ENCODE measurements at regions of chr3 and their contacts with region 1.

Region 1: DNA sequence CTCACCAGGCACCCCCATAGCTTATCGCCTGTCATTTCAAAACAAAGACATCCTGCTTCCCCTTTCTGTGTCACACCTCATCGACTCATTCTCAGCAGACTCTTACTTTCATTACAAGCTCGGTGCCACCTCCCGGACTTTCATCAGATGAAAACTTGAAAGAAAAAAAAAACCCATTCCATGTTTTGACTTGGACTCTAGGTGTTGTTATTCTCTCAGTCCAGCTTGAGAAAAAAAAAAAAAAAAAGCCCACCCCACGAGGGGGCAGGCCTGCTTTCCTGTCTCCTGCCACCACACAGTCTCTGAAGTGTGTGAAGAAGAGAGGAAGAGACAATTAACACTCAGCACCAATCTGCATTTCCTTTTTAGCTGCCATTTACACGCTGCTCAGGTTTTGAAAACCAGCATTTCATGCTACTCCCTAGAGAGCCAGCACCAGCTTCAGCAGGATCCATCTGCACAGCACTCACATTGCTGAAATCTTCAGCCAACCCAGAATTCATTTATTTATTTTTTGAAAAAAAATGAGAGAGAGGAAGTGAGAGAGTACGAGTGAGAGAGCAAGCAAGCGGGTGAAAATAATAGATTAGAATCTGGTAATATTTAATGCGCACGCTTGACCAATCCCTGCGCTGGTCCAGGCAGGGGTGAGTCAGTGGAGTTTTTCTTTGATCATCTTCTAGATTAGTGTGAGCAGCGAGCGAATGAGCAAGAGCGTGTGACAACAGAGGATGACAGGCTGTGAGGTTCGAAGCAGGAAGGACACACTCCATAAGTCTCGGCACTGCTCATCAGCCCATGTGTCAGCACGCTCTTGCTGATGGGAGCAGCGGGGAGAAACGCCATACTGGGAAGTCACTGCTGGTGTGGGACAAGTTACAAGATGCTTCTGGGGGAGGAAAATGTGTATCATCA is 23.5 kb downstream of the ZNF80 start:
- DNase-seq: peak; percentile 89
- H3K4me3 Mint-ChIP-seq: no peak overlapping the region
- H3K27ac Mint-ChIP-seq: no peak overlapping the region
- H3K4me1 Mint-ChIP-seq: peaks cover 4% of the 10 kb centered on the region
- H3K27me3 Mint-ChIP-seq: no peaks in the 10 kb centered on the region

Region 2: DNA sequence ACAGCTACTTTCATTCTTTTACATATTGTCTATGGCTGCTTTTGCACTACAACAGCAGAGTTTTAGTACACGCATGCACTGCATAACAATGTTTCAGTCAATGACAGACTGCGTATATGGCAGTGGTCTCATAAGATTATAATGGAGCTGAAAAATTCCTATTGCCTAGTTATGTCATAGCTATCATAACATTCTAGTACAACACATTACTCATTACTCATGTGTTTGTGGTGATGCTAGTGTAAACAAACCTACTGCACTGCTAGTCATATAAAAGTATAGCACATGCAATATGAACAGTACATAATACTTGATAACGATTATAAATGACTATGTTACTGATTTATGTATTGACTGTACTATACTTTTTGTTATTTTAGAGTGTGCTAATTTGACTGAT is 109.5 kb before region 1 on chr3:
- CTCF ChIA-PET with region 1: no interaction called
- POLR2A ChIA-PET with region 1: no interaction called
- intact Hi-C with region 1: no loop called
- DNase-seq: no peak
- H3K4me3 Mint-ChIP-seq: no peak overlapping the region
- H3K27ac Mint-ChIP-seq: no peak overlapping the region
- H3K4me1 Mint-ChIP-seq: no peaks in the 10 kb centered on the region
- H3K27me3 Mint-ChIP-seq: peaks cover 3% of the 10 kb centered on the region

Region 3: GRCh38 chr3:114171677-114172076 is 42.2 kb before region 1 on chr3:
- CTCF ChIA-PET with region 1: no interaction called
- POLR2A ChIA-PET with region 1: no interaction called
- intact Hi-C with region 1: no loop called
- DNase-seq: no peak
- H3K4me3 Mint-ChIP-seq: no peak overlapping the region
- H3K27ac Mint-ChIP-seq: no peak overlapping the region
- H3K4me1 Mint-ChIP-seq: peaks cover 8% of the 10 kb centered on the region
- H3K27me3 Mint-ChIP-seq: no peaks in the 10 kb centered on the region

Region 4: DNA sequence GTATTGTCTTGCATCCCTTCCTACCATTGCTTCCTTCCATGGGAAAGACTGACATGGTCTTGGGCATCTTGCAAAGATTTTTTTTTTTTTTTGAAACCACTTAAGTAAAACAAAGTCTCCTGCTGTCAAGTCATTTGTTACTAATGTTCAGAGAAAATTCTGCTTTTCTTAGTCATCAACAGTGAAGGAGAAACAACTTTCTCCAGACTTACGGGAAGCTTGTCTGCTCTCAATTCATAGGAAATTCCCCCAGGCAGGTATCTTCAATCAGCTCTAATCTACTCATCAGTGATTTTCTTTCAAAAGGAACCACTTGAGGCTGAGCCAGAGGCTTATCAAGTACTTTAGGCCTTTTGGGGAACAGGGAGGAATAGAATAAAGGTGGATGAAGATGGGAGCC is 19.1 kb before region 1 on chr3:
- CTCF ChIA-PET with region 1: interaction called, 12 read pairs
- POLR2A ChIA-PET with region 1: interaction called, 5 read pairs
- intact Hi-C with region 1: loop called (anchors 2 kb)
- DNase-seq: no peak
- H3K4me3 Mint-ChIP-seq: no peak overlapping the region
- H3K27ac Mint-ChIP-seq: peak overlapping the region; percentile 44
- H3K4me1 Mint-ChIP-seq: peaks cover 6% of the 10 kb centered on the region
- H3K27me3 Mint-ChIP-seq: no peaks in the 10 kb centered on the region

Region 5: GRCh38 chr3:114252954-114253353 is 39.1 kb after region 1 on chr3:
- CTCF ChIA-PET with region 1: no interaction called
- POLR2A ChIA-PET with region 1: interaction called, 4 read pairs
- intact Hi-C with region 1: loop called (anchors 1 kb)
- DNase-seq: no peak
- H3K4me3 Mint-ChIP-seq: no peak overlapping the region
- H3K27ac Mint-ChIP-seq: no peak overlapping the region
- H3K4me1 Mint-ChIP-seq: peaks cover 15% of the 10 kb centered on the region
- H3K27me3 Mint-ChIP-seq: no peaks in the 10 kb centered on the region

Region 6: DNA sequence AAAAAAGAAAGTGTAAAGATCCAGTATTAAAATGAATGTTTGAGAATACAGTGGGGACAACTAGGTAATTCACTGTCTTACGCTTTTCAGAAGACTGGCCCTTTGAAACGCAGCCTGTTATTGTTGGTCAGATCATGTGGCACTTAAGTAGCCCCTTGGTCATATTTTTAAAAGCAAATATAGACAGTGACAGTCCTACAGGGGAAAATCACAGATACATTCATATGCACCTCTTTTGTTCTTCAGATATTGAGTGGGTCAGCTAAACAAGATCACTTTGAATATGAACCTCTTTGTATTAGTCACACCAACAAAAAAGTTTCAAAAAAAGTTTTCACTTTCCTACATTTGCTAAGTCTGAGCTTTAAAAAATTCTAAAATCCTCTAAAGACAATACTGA is 115.9 kb after region 1 on chr3:
- CTCF ChIA-PET with region 1: interaction called, 3 read pairs
- POLR2A ChIA-PET with region 1: interaction called, 16 read pairs
- intact Hi-C with region 1: loop called (anchors 1 kb)
- DNase-seq: no peak
- H3K4me3 Mint-ChIP-seq: peak overlapping the region; percentile 35
- H3K27ac Mint-ChIP-seq: peak overlapping the region; percentile 84
- H3K4me1 Mint-ChIP-seq: peaks cover 91% of the 10 kb centered on the region
- H3K27me3 Mint-ChIP-seq: no peaks in the 10 kb centered on the region

Region 7: DNA sequence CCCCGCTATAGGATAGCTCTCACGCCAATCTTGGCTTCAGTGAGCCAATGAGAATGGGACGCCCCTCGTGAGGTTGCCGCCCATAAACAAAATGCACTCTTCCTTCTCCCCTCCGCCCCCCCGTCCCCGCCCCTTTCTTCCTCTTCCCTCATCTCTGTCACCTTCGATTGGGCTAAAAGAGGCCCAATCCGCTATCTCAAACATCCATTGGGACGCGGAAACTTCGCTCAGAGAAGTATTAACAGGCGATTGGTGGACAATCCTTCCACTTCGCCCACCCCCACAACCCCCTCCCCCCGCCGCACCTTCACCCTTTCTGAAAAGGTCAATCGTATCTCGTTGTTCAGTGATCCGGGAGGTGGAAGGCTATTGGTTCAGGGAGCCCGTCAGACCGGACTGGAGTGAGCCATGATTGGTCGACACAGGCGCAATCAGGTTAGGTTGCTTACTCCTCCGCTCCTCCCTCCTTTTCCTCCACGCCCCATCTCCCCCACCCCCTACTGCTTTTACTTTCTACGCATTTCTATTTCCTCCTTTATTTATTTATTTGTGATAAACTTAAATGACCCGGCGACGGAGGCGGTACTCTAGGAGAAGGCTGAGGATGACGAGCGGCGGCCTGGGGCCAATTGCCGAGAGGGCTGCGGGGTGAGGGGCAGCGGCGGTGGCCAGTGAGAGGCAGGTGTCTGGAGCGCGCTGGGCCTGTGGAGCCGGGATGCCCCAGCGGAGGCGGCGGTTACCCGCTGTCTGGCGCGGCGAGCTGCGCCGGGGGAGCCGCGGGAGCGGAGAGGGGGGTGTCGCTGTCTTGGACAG is 933.7 kb after region 1 on chr3:
- CTCF ChIA-PET with region 1: no interaction called
- POLR2A ChIA-PET with region 1: no interaction called
- intact Hi-C with region 1: loop called (anchors 1 kb)
- DNase-seq: peak; percentile 98
- H3K4me3 Mint-ChIP-seq: peak overlapping the region; percentile 94
- H3K27ac Mint-ChIP-seq: peak overlapping the region; percentile 91
- H3K4me1 Mint-ChIP-seq: peaks cover 23% of the 10 kb centered on the region
- H3K27me3 Mint-ChIP-seq: peaks cover 2% of the 10 kb centered on the region